Caco-2 (cell line): ENCODE measurements at regions of chrX and their contacts with region 1.

Region 1: GRCh38 chrX:15349046-15349445 is 13.7 kb upstream of the PIGA start:
- DNase-seq: peak; percentile 38 to 49
- H3K4me3 ChIP-seq: no peak overlapping the region
- H3K4me3 Mint-ChIP-seq: no peak overlapping the region
- H3K27ac Mint-ChIP-seq: no peak overlapping the region
- H3K4me1 ChIP-seq: no peaks in the 10 kb centered on the region
- H3K4me1 Mint-ChIP-seq: no peaks in the 10 kb centered on the region
- H3K27me3 ChIP-seq: no peaks in the 10 kb centered on the region
- H3K27me3 Mint-ChIP-seq: peaks cover 6% of the 10 kb centered on the region
- CTCF ChIP-seq: peak; percentile 24 to 29

Region 2: GRCh38 chrX:15564981-15565579 is 216.0 kb after region 1 on chrX:
- CTCF ChIA-PET with region 1: no interaction called
- POLR2A ChIA-PET with region 1: no interaction called
- intact Hi-C with region 1: loop called (anchors 1 kb)
- DNase-seq: peak; percentile 50 to 53
- H3K4me3 ChIP-seq: no peak overlapping the region
- H3K4me3 Mint-ChIP-seq: no peak overlapping the region
- H3K27ac Mint-ChIP-seq: no peak overlapping the region
- H3K4me1 ChIP-seq: no peaks in the 10 kb centered on the region
- H3K4me1 Mint-ChIP-seq: peaks cover 6% of the 10 kb centered on the region
- H3K27me3 ChIP-seq: no peaks in the 10 kb centered on the region
- H3K27me3 Mint-ChIP-seq: peaks cover 3% of the 10 kb centered on the region
- CTCF ChIP-seq: peak; percentile 42 to 52